Ascending aorta (tissue), 2 donors: ENCODE measurements at regions of chr17 and their contacts with region 1.

Region 1: GRCh38 chr17:44070455-44071197 is at the start of gene G6PC3:
- DNase-seq: peak; percentile 83 to 98
- H3K4me3 ChIP-seq: peak within 1 kb of the TSS; percentile 66 to 68
- H3K27ac ChIP-seq: peak within 1 kb of the TSS; percentile 84 to 89
- H3K4me1 ChIP-seq: peaks cover 5 to 35% of the 10 kb centered on the region in 2 donors
- H3K27me3 ChIP-seq: no peaks in the 10 kb centered on the region
- CTCF ChIP-seq: peak in 1 of 3 experiments; percentile 14
- total RNA-seq, gene G6PC3: 111 TPM

Region 2: GRCh38 chr17:43891851-43892646 is 178.6 kb before region 1 on chr17:
- intact Hi-C with region 1: no loop called
- DNase-seq: no peak
- H3K4me3 ChIP-seq: no peak overlapping the region
- H3K27ac ChIP-seq: no peak overlapping the region
- H3K4me1 ChIP-seq: no peaks in the 10 kb centered on the region
- H3K27me3 ChIP-seq: no peaks in the 10 kb centered on the region
- CTCF ChIP-seq: no peak

Region 3: GRCh38 chr17:44006598-44007345 is 63.9 kb before region 1 on chr17:
- intact Hi-C with region 1: loop called (anchors 2 kb)
- DNase-seq: peak; percentile 98
- H3K4me3 ChIP-seq: peak overlapping the region; percentile 51 to 67
- H3K27ac ChIP-seq: peak overlapping the region in 1 of 2 donors; percentile 32
- H3K4me1 ChIP-seq: peaks cover 4 to 31% of the 10 kb centered on the region in 2 donors
- H3K27me3 ChIP-seq: no peaks in the 10 kb centered on the region
- CTCF ChIP-seq: peak; percentile 39 to 55 (median 53)

Region 4: DNA sequence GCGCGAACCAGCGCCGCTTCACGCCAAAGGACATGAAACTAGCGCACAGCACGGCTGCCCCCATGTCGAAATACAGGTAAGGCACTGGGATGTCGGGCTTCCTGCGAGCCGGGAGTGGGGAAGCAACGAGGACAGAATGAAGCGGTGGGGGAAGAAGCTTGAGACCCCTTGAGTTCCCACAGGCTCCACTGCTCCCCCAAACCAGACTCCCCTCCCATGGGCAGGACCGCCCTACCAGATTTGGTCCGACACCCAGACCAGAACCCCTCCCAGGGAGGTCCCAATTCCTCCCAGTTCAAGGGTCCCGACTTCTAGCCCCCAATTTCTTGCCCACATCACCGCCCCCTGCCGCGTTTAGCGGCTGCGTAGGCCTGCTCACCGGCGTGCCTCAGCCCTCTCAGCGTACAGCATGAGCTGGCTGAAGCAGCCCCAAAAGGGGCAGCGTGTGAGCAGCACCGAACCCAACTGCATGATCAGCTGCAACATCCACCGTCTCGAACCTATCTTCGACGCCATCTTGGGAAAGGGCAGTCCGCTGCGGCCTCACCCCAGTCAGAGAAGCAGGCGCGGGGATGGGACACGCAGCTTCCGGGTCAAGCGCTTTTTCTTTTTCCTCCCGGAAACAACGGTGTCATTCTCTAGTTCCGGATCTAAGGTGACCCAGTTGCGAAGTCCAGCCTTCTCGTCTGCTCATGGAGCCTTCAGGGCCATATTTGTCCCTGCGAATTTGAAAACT is 56.0 kb before region 1 on chr17 and contains the start of gene TMEM101:
- intact Hi-C with region 1: loop called (anchors 2 kb)
- DNase-seq: peak; percentile 50 to 95
- H3K4me3 ChIP-seq: peak within 1 kb of the TSS; percentile 73 to 83
- H3K27ac ChIP-seq: peak within 1 kb of the TSS; percentile 50 to 81
- H3K4me1 ChIP-seq: peaks cover 7 to 13% of the 10 kb centered on the region in 2 donors
- H3K27me3 ChIP-seq: no peaks in the 10 kb centered on the region
- CTCF ChIP-seq: no peak
- total RNA-seq, gene TMEM101: 11.0 TPM

Region 5: DNA sequence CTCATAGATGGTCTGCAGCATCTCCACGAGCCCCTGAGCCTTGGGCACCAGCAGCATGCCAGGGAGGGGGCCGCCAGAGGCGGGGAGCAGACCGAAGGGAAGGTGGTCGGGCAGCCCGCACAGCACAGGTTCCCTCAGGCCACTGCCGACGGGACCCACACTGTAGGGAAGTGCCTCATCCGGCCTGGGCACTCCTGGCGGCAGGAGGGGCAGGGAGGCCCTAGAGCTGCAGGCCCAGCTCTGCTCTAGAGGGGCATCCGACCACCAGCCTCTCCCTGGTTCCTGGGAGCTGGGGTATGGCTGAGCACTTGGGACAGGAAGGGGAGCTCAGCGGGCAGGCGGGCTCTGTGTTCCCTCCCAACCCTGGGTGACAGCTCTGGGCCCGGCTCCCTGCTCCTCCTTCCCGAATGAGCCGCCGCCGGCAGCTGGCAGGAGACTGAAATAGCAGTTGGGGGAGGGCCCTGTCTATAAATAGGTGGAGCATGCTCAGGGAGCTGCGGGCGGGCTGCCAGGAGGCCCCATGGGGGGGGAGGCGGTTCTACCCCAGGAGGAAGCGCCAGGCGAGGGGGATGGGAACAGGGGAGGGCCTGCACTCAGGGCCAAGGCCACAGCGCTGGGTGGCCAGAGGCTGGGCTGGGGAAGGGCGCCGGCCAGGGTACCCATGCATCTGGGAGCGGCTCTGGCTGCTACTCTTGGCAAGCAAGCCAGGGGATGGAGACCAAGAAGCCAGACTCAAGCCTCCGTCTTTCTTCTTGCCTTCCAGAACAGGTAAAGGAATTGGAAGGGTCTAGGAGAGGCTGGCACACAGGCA is 40.4 kb after region 1 on chr17:
- intact Hi-C with region 1: loop called (anchors 1 kb)
- DNase-seq: peak; percentile 92 to 99
- H3K4me3 ChIP-seq: peak overlapping the region; percentile 45 to 68
- H3K27ac ChIP-seq: peak overlapping the region; percentile 81 to 95
- H3K4me1 ChIP-seq: peaks cover 32 to 72% of the 10 kb centered on the region in 2 donors
- H3K27me3 ChIP-seq: no peaks in the 10 kb centered on the region
- CTCF ChIP-seq: no peak